ENCODE measurements at regions of chr4 and their contacts with region 1.

Region 1: GRCh38 chr4:163484906-163485305 is 9.6 kb upstream of the TMA16 start:
- DNase-seq: peak; percentile 22 to 78 (median 61)
- ATAC-seq: peak; percentile 67
- H3K4me3 ChIP-seq: no peak overlapping the region
- H3K4me3 Mint-ChIP-seq: no peak overlapping the region
- H3K27ac ChIP-seq: no peak overlapping the region
- H3K27ac Mint-ChIP-seq: no peak overlapping the region
- H3K4me1 ChIP-seq: no peaks in the 10 kb centered on the region
- H3K4me1 Mint-ChIP-seq: no peaks in the 10 kb centered on the region
- H3K27me3 ChIP-seq: no peaks in the 10 kb centered on the region
- H3K27me3 Mint-ChIP-seq: peaks cover 3% of the 10 kb centered on the region
- CTCF ChIP-seq: peak; percentile 81

Region 2: GRCh38 chr4:163681208-163681821 is 196.4 kb after region 1 on chr4:
- CTCF ChIA-PET with region 1: interaction called, 4 read pairs
- POLR2A ChIA-PET with region 1: no interaction called
- intact Hi-C with region 1: loop called (anchors 1 kb)
- DNase-seq: peak in 4 of 9 experiments; percentile 13 to 73 (median 50)
- ATAC-seq: peak; percentile 55
- H3K4me3 ChIP-seq: no peak overlapping the region
- H3K4me3 Mint-ChIP-seq: no peak overlapping the region
- H3K27ac ChIP-seq: no peak overlapping the region
- H3K27ac Mint-ChIP-seq: no peak overlapping the region
- H3K4me1 ChIP-seq: no peaks in the 10 kb centered on the region
- H3K4me1 Mint-ChIP-seq: no peaks in the 10 kb centered on the region
- H3K27me3 ChIP-seq: no peaks in the 10 kb centered on the region
- H3K27me3 Mint-ChIP-seq: peaks cover 3% of the 10 kb centered on the region
- CTCF ChIP-seq: peak; percentile 74

Region 3: DNA sequence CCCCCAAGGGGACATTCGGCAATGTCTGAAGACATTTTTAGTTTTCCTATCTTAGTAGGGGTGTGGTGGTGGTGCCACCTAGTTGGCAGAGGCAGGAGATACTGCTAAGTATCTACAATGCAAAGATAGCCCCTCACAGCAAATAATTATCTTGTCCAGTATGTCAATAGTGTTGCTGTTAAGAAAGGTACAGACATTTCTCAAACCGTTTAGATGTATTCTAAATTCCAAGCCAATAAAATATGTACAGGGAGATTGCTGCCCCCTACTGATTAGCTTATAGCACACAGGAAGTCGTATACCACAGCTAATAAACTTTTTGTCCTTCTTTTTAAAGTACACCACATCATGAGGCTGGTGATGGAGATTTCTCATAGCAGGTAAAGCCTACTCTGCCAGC is 270.1 kb after region 1 on chr4:
- CTCF ChIA-PET with region 1: no interaction called
- POLR2A ChIA-PET with region 1: no interaction called
- intact Hi-C with region 1: loop called (anchors 10 kb)
- DNase-seq: peak in 2 of 9 experiments; percentile 17 to 43
- ATAC-seq: no peak
- H3K4me3 ChIP-seq: no peak overlapping the region
- H3K4me3 Mint-ChIP-seq: no peak overlapping the region
- H3K27ac ChIP-seq: no peak overlapping the region
- H3K27ac Mint-ChIP-seq: no peak overlapping the region
- H3K4me1 ChIP-seq: no peaks in the 10 kb centered on the region
- H3K4me1 Mint-ChIP-seq: no peaks in the 10 kb centered on the region
- H3K27me3 ChIP-seq: no peaks in the 10 kb centered on the region
- H3K27me3 Mint-ChIP-seq: no peaks in the 10 kb centered on the region
- CTCF ChIP-seq: no peak

Region 4: DNA sequence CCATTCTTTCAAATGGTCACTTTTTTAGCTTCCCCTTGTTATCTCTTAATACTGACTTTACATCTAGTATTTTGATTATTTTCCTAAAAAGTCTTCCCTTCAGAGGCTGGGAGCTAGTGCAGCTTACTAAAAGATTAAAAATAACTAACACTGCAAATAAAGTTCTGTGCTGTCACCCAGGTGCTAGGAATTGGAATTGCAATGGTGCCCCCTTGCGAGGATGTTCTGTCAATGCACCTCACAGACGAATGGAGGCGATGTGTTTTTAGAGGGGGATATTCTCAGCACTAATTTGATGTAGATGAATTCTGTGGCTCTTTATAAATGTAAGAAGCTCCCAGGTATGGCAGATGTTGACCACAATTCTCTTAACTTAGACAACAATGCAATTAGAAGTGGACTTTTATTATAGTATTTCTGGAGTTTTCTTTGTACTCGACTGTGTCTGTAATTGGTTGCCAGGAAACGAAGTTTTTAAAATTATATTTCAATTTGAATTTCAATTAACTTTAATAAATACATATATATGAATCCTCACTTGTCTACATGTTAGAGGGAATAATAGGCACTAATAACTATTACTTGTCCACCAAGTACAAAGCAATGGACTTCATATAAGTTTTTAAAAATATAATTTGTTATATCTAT is 1247.0 kb after region 1 on chr4:
- CTCF ChIA-PET with region 1: interaction called, 3 read pairs
- POLR2A ChIA-PET with region 1: no interaction called
- intact Hi-C with region 1: loop called (anchors 5 kb)
- DNase-seq: peak in 7 of 9 experiments; percentile 15 to 57 (median 48)
- ATAC-seq: peak; percentile 44
- H3K4me3 ChIP-seq: no peak overlapping the region
- H3K4me3 Mint-ChIP-seq: no peak overlapping the region
- H3K27ac ChIP-seq: no peak overlapping the region
- H3K27ac Mint-ChIP-seq: no peak overlapping the region
- H3K4me1 ChIP-seq: no peaks in the 10 kb centered on the region
- H3K4me1 Mint-ChIP-seq: no peaks in the 10 kb centered on the region
- H3K27me3 ChIP-seq: peaks cover 0 to 2% of the 10 kb centered on the region in 2 experiments
- H3K27me3 Mint-ChIP-seq: peaks cover 10% of the 10 kb centered on the region
- CTCF ChIP-seq: peak; percentile 88

Region 5: DNA sequence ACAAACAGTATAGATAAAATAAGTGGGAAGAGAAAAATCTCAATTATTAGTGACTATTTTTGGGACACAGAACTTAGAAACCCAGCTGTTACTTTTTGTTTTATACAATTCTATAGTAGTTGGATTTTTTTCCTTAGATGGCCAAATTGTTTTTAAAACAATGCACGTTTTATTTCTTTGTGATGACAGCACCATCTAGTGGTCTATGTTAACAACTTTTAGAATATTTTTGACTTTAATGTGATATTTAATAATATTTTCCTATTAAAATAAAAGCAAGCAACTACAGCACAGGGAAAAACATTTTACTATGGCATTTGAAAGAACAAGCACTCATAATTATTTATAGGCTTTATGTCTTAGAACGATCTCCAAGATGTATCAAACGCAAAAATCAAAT is 1263.5 kb after region 1 on chr4:
- CTCF ChIA-PET with region 1: no interaction called
- POLR2A ChIA-PET with region 1: no interaction called
- intact Hi-C with region 1: loop called (anchors 2 to 5 kb)
- DNase-seq: peak in 2 of 9 experiments; percentile 6 to 8
- ATAC-seq: no peak
- H3K4me3 ChIP-seq: no peak overlapping the region
- H3K4me3 Mint-ChIP-seq: no peak overlapping the region
- H3K27ac ChIP-seq: no peak overlapping the region
- H3K27ac Mint-ChIP-seq: no peak overlapping the region
- H3K4me1 ChIP-seq: no peaks in the 10 kb centered on the region
- H3K4me1 Mint-ChIP-seq: no peaks in the 10 kb centered on the region
- H3K27me3 ChIP-seq: no peaks in the 10 kb centered on the region
- H3K27me3 Mint-ChIP-seq: no peaks in the 10 kb centered on the region
- CTCF ChIP-seq: no peak